Heart left ventricle (tissue), 16 donors: ENCODE measurements at regions of chr4 and their contacts with region 1.

Region 1: DNA sequence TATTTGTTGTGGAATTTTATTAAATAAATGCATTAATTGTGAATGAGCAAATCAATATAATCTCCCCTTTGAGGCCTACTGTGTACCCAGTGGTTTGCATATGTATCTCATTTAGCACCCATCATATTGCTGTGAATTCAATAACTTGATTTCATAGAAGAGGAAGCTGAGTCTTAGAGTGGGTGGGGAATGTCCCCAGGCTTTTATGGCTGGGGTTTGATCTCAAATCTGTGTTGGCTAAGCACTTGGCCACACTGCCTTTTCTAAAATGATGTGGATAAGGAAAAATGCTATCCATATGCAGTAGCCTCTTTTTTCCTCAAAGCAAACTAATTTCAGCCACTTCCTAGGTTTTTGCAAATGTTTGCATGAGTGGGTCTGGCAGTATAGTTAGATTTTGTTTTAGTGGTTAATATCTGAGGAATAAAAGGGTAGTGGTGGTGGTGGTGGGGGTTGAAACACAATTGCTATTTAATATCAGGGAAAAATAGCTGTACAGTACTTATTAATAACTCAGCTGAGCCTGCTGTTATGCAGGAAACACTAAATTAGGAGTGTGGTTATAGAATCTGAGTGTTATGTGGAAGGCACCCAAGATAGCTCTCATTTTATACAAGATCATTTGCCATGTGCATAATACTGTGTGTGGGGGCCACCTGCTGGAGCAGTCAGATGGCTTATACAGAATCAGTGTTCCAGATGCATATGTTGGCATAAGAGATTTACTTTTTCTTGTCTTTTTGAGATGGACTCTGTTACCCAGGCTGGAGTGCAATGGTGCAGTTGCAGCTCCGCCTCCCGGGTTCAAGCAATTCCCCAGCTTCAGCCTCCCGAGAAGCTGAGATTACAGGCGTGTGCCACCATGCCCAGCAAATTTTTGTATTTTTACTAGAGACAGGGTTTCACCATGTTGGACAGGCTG is 108.0 kb downstream of the TMEM131L start:
- DNase-seq: peak; percentile 61 to 76 (median 65)
- ATAC-seq: peak; percentile 81 to 88 (median 84)
- H3K4me3 ChIP-seq: no peak overlapping the region
- H3K27ac ChIP-seq: peak overlapping the region in 11 of 12 donors; percentile 46 to 81 (median 71)
- H3K4me1 ChIP-seq: peaks cover 4 to 51% (median 23%) of the 10 kb centered on the region in 12 donors
- H3K27me3 ChIP-seq: no peaks in the 10 kb centered on the region
- CTCF ChIP-seq: peak; percentile 47 to 84 (median 66)
- POLR2A ChIP-seq: no peak

Region 2: GRCh38 chr4:153008578-153009199 is 565.5 kb before region 1 on chr4:
- intact Hi-C with region 1: no loop called
- DNase-seq: no peak
- ATAC-seq: no peak
- H3K4me3 ChIP-seq: no peak overlapping the region
- H3K27ac ChIP-seq: no peak overlapping the region
- H3K4me1 ChIP-seq: no peaks in the 10 kb centered on the region
- H3K27me3 ChIP-seq: no peaks in the 10 kb centered on the region
- CTCF ChIP-seq: no peak
- POLR2A ChIP-seq: no peak

Region 3: GRCh38 chr4:153211986-153212729 is 362.0 kb before region 1 on chr4:
- intact Hi-C with region 1: loop called in 2 of 10 experiments (anchors 10 kb)
- DNase-seq: no peak
- ATAC-seq: no peak
- H3K4me3 ChIP-seq: no peak overlapping the region
- H3K27ac ChIP-seq: no peak overlapping the region
- H3K4me1 ChIP-seq: peaks cover 0 to 41% (median 8%) of the 10 kb centered on the region in 12 donors
- H3K27me3 ChIP-seq: no peaks in the 10 kb centered on the region
- CTCF ChIP-seq: no peak
- POLR2A ChIP-seq: no peak

Region 4: GRCh38 chr4:153318696-153319320 is 255.3 kb before region 1 on chr4:
- intact Hi-C with region 1: no loop called
- DNase-seq: no peak
- ATAC-seq: peak in 3 of 4 donors; percentile 74 to 77 (median 77)
- H3K4me3 ChIP-seq: no peak overlapping the region
- H3K27ac ChIP-seq: no peak overlapping the region
- H3K4me1 ChIP-seq: no peaks in the 10 kb centered on the region
- H3K27me3 ChIP-seq: no peaks in the 10 kb centered on the region
- CTCF ChIP-seq: peak; percentile 53 to 81 (median 74)
- POLR2A ChIP-seq: no peak

Region 5: GRCh38 chr4:153432968-153433753 is 141.0 kb before region 1 on chr4:
- intact Hi-C with region 1: loop called (anchors 1 to 10 kb)
- DNase-seq: peak in 4 of 5 donors; percentile 63 to 66 (median 66)
- ATAC-seq: peak; percentile 57 to 92 (median 88)
- H3K4me3 ChIP-seq: peak overlapping the region in 4 of 12 donors; percentile 14 to 41 (median 30)
- H3K27ac ChIP-seq: peak overlapping the region in 1 of 12 donors; percentile 63
- H3K4me1 ChIP-seq: peaks cover 0 to 28% (median 0%) of the 10 kb centered on the region in 12 donors
- H3K27me3 ChIP-seq: no peaks in the 10 kb centered on the region
- CTCF ChIP-seq: peak; percentile 59 to 85 (median 69)
- POLR2A ChIP-seq: no peak

Region 6: GRCh38 chr4:153535772-153536513 is 38.2 kb before region 1 on chr4:
- intact Hi-C with region 1: loop called in 1 of 10 experiments (anchors 5 kb)
- DNase-seq: no peak
- ATAC-seq: no peak
- H3K4me3 ChIP-seq: no peak overlapping the region
- H3K27ac ChIP-seq: peak overlapping the region in 1 of 12 donors; percentile 10
- H3K4me1 ChIP-seq: peaks cover 4 to 83% (median 57%) of the 10 kb centered on the region in 12 donors
- H3K27me3 ChIP-seq: no peaks in the 10 kb centered on the region
- CTCF ChIP-seq: peak in 1 of 12 donors; percentile 8
- POLR2A ChIP-seq: no peak

Region 7: DNA sequence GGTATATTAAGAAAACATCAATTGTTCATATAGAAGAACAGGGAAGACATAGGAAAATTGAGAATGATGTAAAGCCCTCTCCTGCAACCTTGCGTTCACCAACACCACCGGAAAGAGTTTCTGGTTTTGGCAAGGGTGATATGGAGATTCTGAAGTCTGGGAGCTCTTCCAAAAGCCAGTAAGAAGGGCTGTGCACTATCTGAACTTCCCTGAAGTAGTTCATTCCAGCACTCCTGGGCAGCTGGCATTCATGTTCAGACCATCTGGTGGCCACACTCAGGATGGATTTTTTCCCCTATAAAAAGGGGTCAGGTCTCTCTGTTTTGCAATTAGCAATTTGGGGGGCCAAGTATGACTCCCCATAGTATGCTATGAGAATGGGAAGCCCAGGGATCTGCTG is 94.5 kb after region 1 on chr4:
- intact Hi-C with region 1: no loop called
- DNase-seq: no peak
- ATAC-seq: no peak
- H3K4me3 ChIP-seq: no peak overlapping the region
- H3K27ac ChIP-seq: no peak overlapping the region
- H3K4me1 ChIP-seq: no peaks in the 10 kb centered on the region
- H3K27me3 ChIP-seq: no peaks in the 10 kb centered on the region
- CTCF ChIP-seq: no peak
- POLR2A ChIP-seq: no peak